CD4-positive, alpha-beta memory T cell (primary cell): ENCODE measurements at regions of chr7 and their contacts with region 1.

Region 1: DNA sequence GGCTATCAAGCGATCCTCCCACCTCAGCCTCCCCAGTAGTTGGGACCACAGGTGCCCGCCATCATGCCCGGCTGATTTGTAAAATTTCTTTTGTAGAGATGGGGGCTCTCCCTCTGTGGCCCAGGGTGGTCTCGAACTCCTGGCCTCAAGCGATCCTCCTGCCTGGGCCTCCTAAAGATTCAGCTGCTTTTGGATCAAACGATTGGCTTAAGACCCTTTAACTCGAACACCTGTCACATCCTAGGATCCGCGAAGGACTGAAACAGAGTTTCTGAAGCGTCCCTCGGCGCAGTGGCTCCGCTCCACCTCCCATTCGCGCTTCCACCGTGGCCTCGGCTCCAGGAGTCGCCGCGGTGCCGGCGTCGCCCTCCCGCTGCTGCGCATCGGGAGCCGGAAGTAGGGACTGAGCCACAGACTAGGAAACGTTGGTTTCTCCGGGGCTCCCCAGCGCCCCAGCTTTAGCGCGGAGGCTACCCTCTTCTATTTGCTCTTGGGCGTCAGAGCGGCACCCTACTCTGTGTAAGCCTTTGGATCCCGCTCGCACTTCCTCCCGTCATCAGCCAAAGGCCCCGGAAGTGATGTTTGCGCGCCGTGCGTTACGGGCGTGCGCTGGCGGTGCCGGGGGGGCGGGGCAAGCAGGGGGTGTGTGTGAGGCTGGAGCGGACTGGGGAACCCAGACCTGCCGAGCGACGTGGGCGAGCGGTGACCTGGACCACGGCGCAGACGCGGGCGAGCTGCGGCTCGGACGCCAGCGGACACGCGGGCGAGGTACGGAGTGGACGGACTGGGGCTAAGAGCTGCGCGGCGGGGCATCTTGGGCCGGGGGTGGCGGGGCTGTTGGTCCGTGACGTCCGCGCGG is 53.0 kb downstream of the KCTD7 start:
- DNase-seq: peak; percentile 94 to 97 (median 95)
- H3K4me3 ChIP-seq: peak overlapping the region; percentile 78 to 84
- H3K4me3 Mint-ChIP-seq: peak overlapping the region; percentile 90 to 99 (median 92)
- H3K27ac ChIP-seq: peak overlapping the region; percentile 99
- H3K27ac Mint-ChIP-seq: peak overlapping the region; percentile 95 to 99 (median 98)
- H3K4me1 ChIP-seq: peaks cover 18% of the 10 kb centered on the region
- H3K4me1 Mint-ChIP-seq: peaks cover 14 to 38% (median 26%) of the 10 kb centered on the region in 4 donors
- H3K27me3 ChIP-seq: no peaks in the 10 kb centered on the region
- H3K27me3 Mint-ChIP-seq: no peaks in the 10 kb centered on the region

Region 2: GRCh38 chr7:66557608-66558143 is 124.0 kb before region 1 on chr7:
- CTCF ChIA-PET with region 1: no interaction called
- POLR2A ChIA-PET with region 1: no interaction called
- intact Hi-C with region 1: loop called (anchors 1 kb)
- DNase-seq: peak; percentile 60 to 73 (median 64)
- H3K4me3 ChIP-seq: no peak overlapping the region
- H3K4me3 Mint-ChIP-seq: no peak overlapping the region
- H3K27ac ChIP-seq: no peak overlapping the region
- H3K27ac Mint-ChIP-seq: peak overlapping the region in 3 of 7 donors; percentile 30 to 78 (median 57)
- H3K4me1 ChIP-seq: no peaks in the 10 kb centered on the region
- H3K4me1 Mint-ChIP-seq: peaks cover 5 to 18% (median 7%) of the 10 kb centered on the region in 4 donors
- H3K27me3 ChIP-seq: no peaks in the 10 kb centered on the region
- H3K27me3 Mint-ChIP-seq: no peaks in the 10 kb centered on the region

Region 3: DNA sequence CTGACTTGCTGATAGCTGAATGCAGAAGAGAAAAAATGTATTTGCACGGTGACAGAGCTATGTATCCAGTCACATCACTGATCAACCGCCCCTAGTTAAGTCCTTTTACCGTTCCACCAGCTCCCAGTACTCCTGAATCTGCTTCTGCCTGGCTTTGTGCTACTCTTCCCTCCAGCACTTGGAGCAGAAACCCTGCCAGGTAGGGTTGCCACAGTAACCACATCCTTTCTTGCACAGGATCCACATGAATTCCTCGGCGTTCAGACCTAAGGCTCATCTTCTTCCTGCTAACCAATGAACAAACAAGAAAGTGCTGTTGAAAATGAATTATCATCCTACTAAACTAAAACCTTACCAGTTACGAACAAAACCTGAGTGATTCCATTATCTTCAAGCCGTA is 105.1 kb before region 1 on chr7:
- CTCF ChIA-PET with region 1: no interaction called
- POLR2A ChIA-PET with region 1: no interaction called
- intact Hi-C with region 1: no loop called
- DNase-seq: no peak
- H3K4me3 ChIP-seq: no peak overlapping the region
- H3K4me3 Mint-ChIP-seq: peak overlapping the region in 1 of 8 donors; percentile 30
- H3K27ac ChIP-seq: no peak overlapping the region
- H3K27ac Mint-ChIP-seq: peak overlapping the region; percentile 16 to 79 (median 52)
- H3K4me1 ChIP-seq: peaks cover 23% of the 10 kb centered on the region
- H3K4me1 Mint-ChIP-seq: peaks cover 25 to 63% (median 47%) of the 10 kb centered on the region in 4 donors
- H3K27me3 ChIP-seq: no peaks in the 10 kb centered on the region
- H3K27me3 Mint-ChIP-seq: no peaks in the 10 kb centered on the region

Region 4: GRCh38 chr7:66591799-66592596 is 89.7 kb before region 1 on chr7:
- CTCF ChIA-PET with region 1: no interaction called
- POLR2A ChIA-PET with region 1: interaction called, 4 read pairs
- intact Hi-C with region 1: loop called (anchors 1 kb)
- DNase-seq: peak; percentile 85 to 93 (median 88)
- H3K4me3 ChIP-seq: peak overlapping the region; percentile 57 to 94
- H3K4me3 Mint-ChIP-seq: peak overlapping the region; percentile 96 to 99 (median 97)
- H3K27ac ChIP-seq: peak overlapping the region; percentile 80
- H3K27ac Mint-ChIP-seq: peak overlapping the region; percentile 95 to 99 (median 98)
- H3K4me1 ChIP-seq: peaks cover 48% of the 10 kb centered on the region
- H3K4me1 Mint-ChIP-seq: peaks cover 31 to 61% (median 46%) of the 10 kb centered on the region in 4 donors
- H3K27me3 ChIP-seq: no peaks in the 10 kb centered on the region
- H3K27me3 Mint-ChIP-seq: no peaks in the 10 kb centered on the region

Region 5: DNA sequence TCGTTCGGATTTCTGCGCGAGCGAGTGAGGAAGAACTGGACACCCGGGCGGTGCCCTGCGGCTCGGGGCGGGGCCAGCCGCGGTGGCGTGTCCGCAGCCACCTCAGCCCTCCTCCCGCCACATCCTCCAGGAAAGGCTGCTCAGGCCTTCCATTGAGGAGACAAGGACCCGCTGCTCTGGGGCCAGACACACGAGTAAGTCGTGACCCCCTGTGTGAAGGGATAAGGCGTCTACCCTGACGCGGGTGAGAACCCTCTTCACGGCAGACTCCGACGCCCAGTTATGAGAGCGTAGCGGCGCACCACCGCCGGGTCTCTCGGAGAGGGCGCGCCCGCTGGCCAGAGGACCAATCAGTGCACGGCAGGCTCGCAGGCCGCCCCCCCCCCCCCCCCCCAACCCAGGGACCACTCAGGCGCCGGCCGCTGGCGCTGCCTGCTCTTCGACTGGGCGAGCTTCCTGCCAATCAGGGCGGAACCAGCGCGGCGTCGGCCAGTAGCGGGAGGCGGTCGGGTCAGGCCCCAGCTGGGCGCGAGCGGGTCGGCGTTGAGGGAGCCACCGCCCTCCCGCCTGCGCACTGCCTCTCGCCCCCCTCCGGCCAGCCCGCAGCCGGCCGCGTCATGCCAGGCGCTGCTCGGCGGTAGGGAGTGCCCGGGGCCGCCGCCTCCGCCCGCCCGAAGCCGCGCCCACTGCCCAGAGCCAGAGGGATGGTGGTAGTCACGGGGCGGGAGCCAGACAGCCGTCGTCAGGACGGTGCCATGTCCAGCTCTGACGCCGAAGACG is 53.2 kb before region 1 on chr7 and contains the start of gene KCTD7:
- CTCF ChIA-PET with region 1: interaction called, 4 read pairs
- POLR2A ChIA-PET with region 1: interaction called, 14 read pairs
- intact Hi-C with region 1: loop called (anchors 1 kb)
- DNase-seq: peak; percentile 94 to 97 (median 95)
- H3K4me3 ChIP-seq: peak within 1 kb of the TSS; percentile 77 to 89
- H3K4me3 Mint-ChIP-seq: peak within 1 kb of the TSS; percentile 87 to 92 (median 91)
- H3K27ac ChIP-seq: peak within 1 kb of the TSS; percentile 89
- H3K27ac Mint-ChIP-seq: peak within 1 kb of the TSS; percentile 87 to 95 (median 93)
- H3K4me1 ChIP-seq: peaks cover 41% of the 10 kb centered on the region
- H3K4me1 Mint-ChIP-seq: peaks cover 36 to 46% (median 39%) of the 10 kb centered on the region in 4 donors
- H3K27me3 ChIP-seq: no peaks in the 10 kb centered on the region
- H3K27me3 Mint-ChIP-seq: no peaks in the 10 kb centered on the region
- total RNA-seq, gene KCTD7: 57.3 to 63.8 TPM

Region 6: DNA sequence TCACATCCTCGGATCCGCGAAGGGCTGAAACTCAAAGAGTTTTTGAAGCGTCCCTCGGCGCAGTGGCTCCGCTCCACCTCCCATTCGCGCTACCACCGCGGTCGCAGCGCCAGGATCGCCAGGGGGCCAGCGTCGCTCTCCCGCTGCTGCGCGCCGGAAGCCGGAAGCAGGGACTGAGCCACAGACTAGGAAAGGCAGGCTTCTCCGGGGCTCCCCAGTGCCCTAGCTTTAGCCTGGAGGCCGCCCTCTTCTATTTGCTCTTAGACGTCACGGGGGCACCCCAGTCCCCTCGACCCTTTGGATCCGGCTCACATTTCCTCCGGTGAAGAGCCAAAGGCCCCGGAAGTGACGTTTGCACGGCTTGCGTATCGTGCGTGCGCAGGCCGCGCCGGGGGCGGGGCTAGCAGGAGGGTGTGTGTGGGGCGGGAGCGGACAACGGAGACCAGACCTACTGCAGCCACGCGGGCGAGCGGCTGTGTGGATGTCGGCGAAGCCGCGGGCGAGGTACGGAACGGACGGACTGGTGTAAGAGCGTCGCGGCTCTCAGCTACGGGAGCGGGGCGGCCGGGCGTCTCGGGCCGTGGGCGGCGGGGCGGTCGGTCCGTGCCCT is 27.5 kb before region 1 on chr7:
- CTCF ChIA-PET with region 1: no interaction called
- POLR2A ChIA-PET with region 1: interaction called, 26 read pairs
- intact Hi-C with region 1: loop called (anchors 1 kb)
- DNase-seq: peak; percentile 97 to 99 (median 98)
- H3K4me3 ChIP-seq: peak overlapping the region; percentile 90 to 91
- H3K4me3 Mint-ChIP-seq: peak overlapping the region; percentile 96 to 99 (median 97)
- H3K27ac ChIP-seq: peak overlapping the region; percentile 95
- H3K27ac Mint-ChIP-seq: peak overlapping the region; percentile 99
- H3K4me1 ChIP-seq: peaks cover 17% of the 10 kb centered on the region
- H3K4me1 Mint-ChIP-seq: peaks cover 10 to 33% (median 24%) of the 10 kb centered on the region in 4 donors
- H3K27me3 ChIP-seq: no peaks in the 10 kb centered on the region
- H3K27me3 Mint-ChIP-seq: no peaks in the 10 kb centered on the region

Region 7: DNA sequence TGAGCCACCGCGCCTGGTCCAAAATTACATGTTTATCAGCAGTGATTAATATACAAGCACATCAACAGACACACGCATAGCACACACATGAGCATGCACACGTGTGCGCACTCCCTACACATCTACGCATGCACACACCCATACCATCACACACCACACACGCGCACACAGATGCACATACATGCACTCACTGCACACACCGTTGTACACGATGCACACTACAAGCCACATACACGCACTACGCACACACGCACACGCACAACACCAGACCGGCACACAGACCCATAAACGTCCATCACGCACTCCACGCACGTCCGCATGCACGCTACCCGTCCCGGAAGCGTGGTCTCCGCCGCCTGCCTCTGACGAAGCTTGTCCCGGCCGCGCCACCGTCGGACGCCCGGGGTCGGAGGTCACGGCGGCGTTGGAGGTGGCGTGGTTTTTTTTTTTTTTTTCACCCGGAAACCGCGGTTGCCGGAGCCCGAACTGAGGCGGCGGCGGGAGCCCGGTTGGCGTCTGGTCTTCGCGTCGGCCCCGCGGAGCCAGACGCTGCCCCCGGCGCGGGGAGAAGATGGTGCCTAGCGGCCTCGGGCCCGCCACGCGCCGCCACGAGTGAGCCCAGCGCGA is 239.2 kb after region 1 on chr7 and contains the start of gene TMEM248:
- CTCF ChIA-PET with region 1: no interaction called
- POLR2A ChIA-PET with region 1: interaction called, 5 read pairs
- intact Hi-C with region 1: loop called (anchors 5 kb)
- DNase-seq: peak; percentile 90 to 95 (median 93)
- H3K4me3 ChIP-seq: peak within 1 kb of the TSS; percentile 64 to 91
- H3K4me3 Mint-ChIP-seq: peak within 1 kb of the TSS; percentile 95 to 100 (median 98)
- H3K27ac ChIP-seq: peak within 1 kb of the TSS; percentile 78
- H3K27ac Mint-ChIP-seq: peak within 1 kb of the TSS; percentile 97 to 100 (median 99)
- H3K4me1 ChIP-seq: peaks cover 38% of the 10 kb centered on the region
- H3K4me1 Mint-ChIP-seq: peaks cover 22 to 49% (median 36%) of the 10 kb centered on the region in 4 donors
- H3K27me3 ChIP-seq: no peaks in the 10 kb centered on the region
- H3K27me3 Mint-ChIP-seq: peaks cover 0 to 2% of the 10 kb centered on the region in 2 donors
- total RNA-seq, gene TMEM248: 95.9 to 96.8 TPM